Cardiac septum (tissue), 1 donor: ENCODE measurements at regions of chr5 and their contacts with region 1.

Region 1: DNA sequence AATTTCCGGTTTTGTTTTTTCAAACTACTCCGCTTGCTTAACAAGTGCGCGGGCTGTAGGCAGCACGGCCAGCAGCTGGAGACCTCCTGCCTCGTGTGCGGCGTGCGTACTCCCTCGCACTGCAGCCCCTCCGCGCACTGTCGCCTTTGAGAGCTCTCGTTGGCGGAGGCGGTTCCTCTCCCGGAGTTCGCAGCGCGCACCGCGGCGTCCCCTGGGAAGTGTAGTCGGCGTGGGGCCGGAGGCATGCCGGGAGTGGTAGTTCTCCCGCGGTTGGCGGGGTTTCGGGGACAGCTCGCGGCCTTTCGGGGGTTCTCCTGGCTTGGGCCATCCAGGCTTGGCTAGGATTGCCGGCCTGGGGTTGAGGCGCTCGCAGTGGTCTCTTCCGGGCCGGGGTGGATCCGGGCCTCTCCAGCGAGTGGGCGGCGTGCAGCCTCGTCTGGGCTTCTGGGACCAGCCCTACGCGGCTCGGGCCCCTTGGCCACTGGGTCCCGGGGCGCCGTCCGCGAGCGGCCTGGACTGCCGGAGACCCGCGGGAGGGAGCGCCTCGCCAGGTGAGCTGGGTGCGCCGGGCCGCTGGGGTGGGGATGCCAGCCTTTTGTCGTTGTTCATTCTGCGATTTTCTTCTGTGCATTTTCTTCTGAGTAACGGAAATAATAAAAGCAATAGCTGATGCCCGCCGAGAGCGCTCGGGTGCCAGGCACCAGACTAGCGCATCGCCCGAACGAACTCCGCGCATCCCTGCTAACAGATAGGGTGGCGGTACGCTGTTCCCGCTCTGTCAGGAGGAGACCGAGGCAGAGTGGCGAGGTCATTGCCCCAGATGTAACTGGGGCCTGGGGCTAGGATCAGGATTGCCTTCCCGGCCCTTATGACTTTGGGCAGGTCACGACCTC is at the start of gene ZNF354C:
- DNase-seq: peak; percentile 95
- total RNA-seq, gene ZNF354C: 4.0 TPM

Region 2: DNA sequence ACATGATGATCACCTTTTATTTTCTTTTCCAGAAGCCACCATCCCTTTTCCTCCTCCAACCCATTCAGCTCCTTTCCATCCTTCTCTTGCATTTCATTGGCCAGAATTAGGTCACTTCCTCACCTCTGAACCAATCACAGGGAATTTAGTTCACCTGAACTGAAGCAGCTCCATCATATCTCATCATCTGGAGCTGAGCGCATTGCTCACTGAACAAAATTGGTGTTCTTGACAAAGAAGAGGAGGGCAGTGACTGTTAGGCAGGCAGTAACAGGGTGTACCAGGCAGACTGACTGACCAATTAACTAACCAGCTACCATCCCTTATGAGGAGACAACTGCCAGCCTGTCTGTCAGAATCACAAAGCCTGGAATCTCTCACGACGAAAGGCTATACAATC is 328.1 kb before region 1 on chr5:
- intact Hi-C with region 1: loop called (anchors 2 kb)
- DNase-seq: no peak

Region 3: GRCh38 chr5:178940569-178941360 is 119.6 kb before region 1 on chr5 and contains the start of gene ZNF454:
- intact Hi-C with region 1: loop called (anchors 2 kb)
- DNase-seq: peak; percentile 96
- total RNA-seq, gene ZNF454: 1.7 TPM

Region 4: DNA sequence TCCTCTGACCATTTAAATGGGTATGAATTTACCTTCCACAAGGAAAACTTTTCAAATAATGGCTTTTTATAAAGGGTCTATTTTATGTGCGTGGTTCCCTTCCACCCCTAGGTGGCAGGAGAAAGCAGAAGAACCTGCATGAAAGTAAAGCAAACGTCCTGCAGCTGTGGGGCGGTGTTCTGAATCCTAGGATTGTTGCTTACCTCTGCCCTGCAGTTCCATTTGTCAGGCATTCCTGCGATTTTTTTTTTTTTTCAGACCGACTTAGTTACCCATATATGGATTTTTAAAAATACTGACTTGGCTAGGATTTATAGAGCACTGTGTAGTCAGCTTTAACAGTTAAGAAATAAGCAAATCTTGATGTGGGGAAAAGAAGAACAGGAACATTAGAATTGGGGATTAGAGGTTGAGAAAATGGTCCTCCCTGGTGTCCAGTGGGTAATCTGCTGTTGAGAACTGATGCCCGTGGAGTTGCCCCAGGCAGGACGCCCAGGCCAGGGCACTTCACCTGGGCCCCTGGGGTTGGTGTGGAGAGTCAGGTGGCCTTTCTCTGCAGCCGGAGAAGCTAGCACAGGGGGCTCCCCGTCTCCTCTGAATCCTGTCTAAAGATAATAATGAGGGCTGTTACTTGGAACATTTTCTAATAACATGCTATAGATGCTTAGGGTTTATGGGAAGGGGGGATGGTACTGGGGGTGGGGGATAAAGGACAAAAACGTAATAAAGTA is 703.0 kb after region 1 on chr5:
- intact Hi-C with region 1: loop called (anchors 5 kb)
- DNase-seq: no peak